ENCODE measurements at regions of chr1 and their contacts with region 1.

Region 1: DNA sequence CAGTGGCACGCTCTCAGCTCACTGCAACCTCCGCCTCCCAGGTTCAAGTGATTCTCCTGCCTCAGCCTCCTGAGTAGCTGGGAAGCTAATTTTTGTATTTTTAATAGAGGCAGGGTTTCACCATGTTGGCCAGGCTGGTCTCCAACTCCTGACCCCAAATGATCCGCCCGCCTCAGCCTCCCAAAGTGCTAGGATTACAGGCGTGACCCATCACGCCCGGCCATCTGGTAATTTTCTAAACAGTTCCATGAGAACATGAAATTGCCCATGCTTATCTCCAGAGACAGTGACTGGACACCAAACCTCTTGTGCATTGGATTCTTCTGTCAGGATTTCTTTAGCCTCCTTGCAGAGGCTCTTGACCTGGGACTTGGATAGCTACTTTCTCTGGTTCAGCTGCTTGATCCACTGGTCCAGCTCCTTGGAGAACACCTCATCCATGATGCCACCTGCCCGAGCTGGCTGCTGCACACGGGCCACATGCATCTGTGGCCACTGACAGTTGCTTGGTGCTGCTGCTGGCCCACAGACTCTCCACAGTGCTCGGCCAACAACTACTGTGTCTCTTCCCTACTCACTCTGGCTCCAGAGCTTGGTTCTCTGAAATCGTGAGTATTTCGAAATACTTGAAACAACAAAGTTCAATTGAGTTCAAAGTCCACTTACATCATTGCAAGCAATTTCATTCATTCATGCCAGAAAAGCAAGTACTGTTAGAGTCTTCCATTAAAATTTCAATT is 40.0 kb upstream of the CTPS1 start:
- DNase-seq: no peak
- H3K4me3 ChIP-seq: no peak overlapping the region
- H3K4me3 Mint-ChIP-seq: no peak overlapping the region
- H3K27ac ChIP-seq: peak overlapping the region; percentile 53
- H3K27ac Mint-ChIP-seq: no peak overlapping the region
- H3K4me1 ChIP-seq: no peaks in the 10 kb centered on the region
- H3K4me1 Mint-ChIP-seq: no peaks in the 10 kb centered on the region
- H3K27me3 ChIP-seq: no peaks in the 10 kb centered on the region
- H3K27me3 Mint-ChIP-seq: peaks cover 4 to 11% of the 10 kb centered on the region in 2 donors

Region 2: DNA sequence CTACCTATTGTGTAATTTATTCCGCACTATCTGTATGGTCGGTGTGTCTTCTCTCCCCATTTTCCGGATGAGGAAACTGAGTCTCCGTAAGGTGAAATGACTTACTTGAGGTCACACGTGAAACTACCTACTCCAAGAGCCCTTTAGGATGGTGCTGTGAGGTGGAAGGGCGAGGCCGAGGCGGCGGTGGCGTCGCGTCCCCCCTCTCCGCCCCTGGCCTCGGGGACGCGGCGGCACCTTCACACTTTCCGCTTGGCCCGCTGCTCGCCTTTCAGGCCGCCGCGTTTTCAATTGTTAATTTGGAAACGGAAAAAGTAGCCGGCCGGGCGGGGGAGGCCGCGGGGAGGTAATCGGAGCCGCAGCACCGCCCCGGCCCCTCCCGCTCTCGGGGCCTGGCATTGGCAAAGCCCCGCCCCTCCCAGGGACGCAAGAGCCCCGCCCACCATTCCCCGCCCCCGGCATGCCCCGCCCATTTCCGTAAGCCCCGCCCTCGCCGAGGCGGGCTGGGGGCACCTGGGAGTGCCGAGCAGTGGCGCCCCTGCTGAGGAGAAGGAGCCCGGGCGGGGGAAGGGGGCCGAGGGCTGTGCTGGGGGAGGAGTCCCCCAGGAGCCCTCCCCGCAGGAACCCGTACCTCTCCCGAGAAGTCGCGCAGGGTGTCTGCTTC is 137.3 kb before region 1 on chr1:
- CTCF ChIA-PET with region 1: no interaction called
- POLR2A ChIA-PET with region 1: no interaction called
- DNase-seq: peak; percentile 83 to 91 (median 84)
- H3K4me3 ChIP-seq: peak overlapping the region; percentile 70
- H3K4me3 Mint-ChIP-seq: peak overlapping the region; percentile 69 to 89 (median 77)
- H3K27ac ChIP-seq: peak overlapping the region; percentile 32
- H3K27ac Mint-ChIP-seq: peak overlapping the region; percentile 73 to 97 (median 90)
- H3K4me1 ChIP-seq: peaks cover 31% of the 10 kb centered on the region
- H3K4me1 Mint-ChIP-seq: peaks cover 18 to 29% (median 20%) of the 10 kb centered on the region in 3 donors
- H3K27me3 ChIP-seq: no peaks in the 10 kb centered on the region
- H3K27me3 Mint-ChIP-seq: peaks cover 0 to 1% of the 10 kb centered on the region in 2 donors

Region 3: DNA sequence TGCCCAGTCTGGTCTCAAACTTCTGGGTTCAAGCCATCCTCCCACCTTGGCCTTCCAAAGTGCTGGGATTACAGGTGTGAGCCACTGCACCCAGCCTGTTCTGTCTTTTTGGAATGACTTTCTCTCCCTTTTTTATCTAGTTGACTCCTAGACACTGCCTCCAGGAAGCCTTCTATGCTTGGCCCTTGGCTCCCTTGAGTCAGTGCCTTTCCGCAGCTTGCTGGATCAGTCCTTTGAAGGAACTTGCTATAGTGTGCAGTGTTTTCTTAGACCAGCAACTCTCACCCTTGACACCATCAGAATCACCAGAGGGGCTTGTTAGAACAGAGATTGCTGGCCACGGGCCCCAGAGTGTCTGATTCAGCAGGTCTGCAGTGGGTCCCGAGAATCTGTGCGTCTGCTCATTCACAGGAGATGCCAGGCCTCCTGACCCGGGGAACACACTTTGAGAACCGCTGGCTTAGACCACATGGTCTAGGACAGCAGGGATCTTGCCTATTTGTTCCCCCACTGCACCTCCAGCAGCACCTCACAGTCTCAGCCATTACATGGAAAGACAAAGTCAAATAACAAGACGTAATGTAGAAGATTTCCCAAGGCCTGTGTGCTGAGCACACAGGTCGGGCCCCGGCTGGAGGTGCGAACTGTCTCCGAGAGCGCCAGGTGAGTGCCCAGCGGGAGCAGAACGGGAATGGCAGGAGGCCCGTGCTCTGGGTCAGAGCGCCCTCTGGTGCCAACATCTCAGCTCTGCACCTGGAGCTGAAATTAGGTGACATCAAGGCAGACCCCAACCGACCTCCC is 12.7 kb after region 1 on chr1:
- CTCF ChIA-PET with region 1: interaction called, 22 read pairs
- POLR2A ChIA-PET with region 1: no interaction called
- DNase-seq: peak; percentile 30 to 64 (median 42)
- H3K4me3 ChIP-seq: no peak overlapping the region
- H3K4me3 Mint-ChIP-seq: peak overlapping the region in 1 of 7 donors; percentile 20
- H3K27ac ChIP-seq: no peak overlapping the region
- H3K27ac Mint-ChIP-seq: no peak overlapping the region
- H3K4me1 ChIP-seq: peaks cover 7% of the 10 kb centered on the region
- H3K4me1 Mint-ChIP-seq: peaks cover 2 to 16% (median 12%) of the 10 kb centered on the region in 3 donors
- H3K27me3 ChIP-seq: no peaks in the 10 kb centered on the region
- H3K27me3 Mint-ChIP-seq: peaks cover 19 to 33% of the 10 kb centered on the region in 2 donors

Region 4: GRCh38 chr1:41021526-41022308 is 82.2 kb after region 1 on chr1 and contains the start of gene SLFNL1:
- CTCF ChIA-PET with region 1: no interaction called
- POLR2A ChIA-PET with region 1: no interaction called
- DNase-seq: no peak
- H3K4me3 ChIP-seq: no peak within 1 kb of the TSS
- H3K4me3 Mint-ChIP-seq: no peak within 1 kb of the TSS
- H3K27ac ChIP-seq: no peak within 1 kb of the TSS
- H3K27ac Mint-ChIP-seq: peak within 1 kb of the TSS in 3 of 8 donors; percentile 14 to 43 (median 37)
- H3K4me1 ChIP-seq: no peaks in the 10 kb centered on the region
- H3K4me1 Mint-ChIP-seq: peaks cover 12 to 14% (median 12%) of the 10 kb centered on the region in 3 donors
- H3K27me3 ChIP-seq: no peaks in the 10 kb centered on the region
- H3K27me3 Mint-ChIP-seq: peaks cover 0 to 2% of the 10 kb centered on the region in 2 donors
- total RNA-seq, gene SLFNL1: 0.09 TPM in 1 of 2 experiments, not detected in the other

Measured in CD8-positive, alpha-beta memory T cell (primary cell).